ENCODE measurements at regions of chr3 and their contacts with region 1.

Region 1: DNA sequence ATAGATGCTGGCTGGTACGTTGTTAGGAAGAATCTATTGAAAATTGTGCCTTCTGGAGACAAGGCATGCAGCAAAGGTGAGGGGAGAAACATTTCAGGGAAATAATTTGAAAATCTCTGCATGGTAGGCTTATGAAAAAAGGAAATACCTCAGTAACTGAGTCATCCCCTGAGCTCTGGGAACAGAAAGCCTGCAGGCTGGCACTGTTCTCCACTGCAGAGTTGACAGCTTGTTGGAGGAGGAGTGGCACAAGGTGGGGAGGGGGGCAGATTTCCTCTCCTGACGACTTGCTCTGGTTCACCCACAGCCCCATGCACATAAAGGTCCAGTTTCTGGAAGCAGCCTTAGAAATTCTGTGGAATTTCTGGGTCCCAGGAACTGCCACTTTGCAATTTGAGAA is 179.4 kb downstream of the ABHD5 start:
- DNase-seq: peak; percentile 50
- H3K4me3 ChIP-seq: no peak overlapping the region
- H3K27ac ChIP-seq: peak overlapping the region; percentile 66
- H3K4me1 ChIP-seq: peaks cover 95% of the 10 kb centered on the region
- H3K27me3 ChIP-seq: no peaks in the 10 kb centered on the region
- CTCF ChIP-seq: no peak

Region 2: GRCh38 chr3:43113671-43114070 is 756.4 kb before region 1 on chr3:
- CTCF ChIA-PET with region 1: no interaction called
- dilution Hi-C with region 1: no loop called
- in situ Hi-C with region 1: no loop called
- intact Hi-C with region 1: no loop called
- DNase-seq: no peak
- H3K4me3 ChIP-seq: no peak overlapping the region
- H3K27ac ChIP-seq: no peak overlapping the region
- H3K4me1 ChIP-seq: no peaks in the 10 kb centered on the region
- H3K27me3 ChIP-seq: no peaks in the 10 kb centered on the region
- CTCF ChIP-seq: no peak

Region 3: GRCh38 chr3:43785551-43785950 is 84.6 kb before region 1 on chr3:
- CTCF ChIA-PET with region 1: no interaction called
- dilution Hi-C with region 1: loop called (anchors 5 kb)
- in situ Hi-C with region 1: no loop called
- intact Hi-C with region 1: no loop called
- DNase-seq: no peak
- H3K4me3 ChIP-seq: no peak overlapping the region
- H3K27ac ChIP-seq: no peak overlapping the region
- H3K4me1 ChIP-seq: no peaks in the 10 kb centered on the region
- H3K27me3 ChIP-seq: no peaks in the 10 kb centered on the region
- CTCF ChIP-seq: no peak

Measured in mammary epithelial cell (primary cell).